HepG2 (cell line): ENCODE measurements at regions of chr2 and their contacts with region 1.

Region 1: DNA sequence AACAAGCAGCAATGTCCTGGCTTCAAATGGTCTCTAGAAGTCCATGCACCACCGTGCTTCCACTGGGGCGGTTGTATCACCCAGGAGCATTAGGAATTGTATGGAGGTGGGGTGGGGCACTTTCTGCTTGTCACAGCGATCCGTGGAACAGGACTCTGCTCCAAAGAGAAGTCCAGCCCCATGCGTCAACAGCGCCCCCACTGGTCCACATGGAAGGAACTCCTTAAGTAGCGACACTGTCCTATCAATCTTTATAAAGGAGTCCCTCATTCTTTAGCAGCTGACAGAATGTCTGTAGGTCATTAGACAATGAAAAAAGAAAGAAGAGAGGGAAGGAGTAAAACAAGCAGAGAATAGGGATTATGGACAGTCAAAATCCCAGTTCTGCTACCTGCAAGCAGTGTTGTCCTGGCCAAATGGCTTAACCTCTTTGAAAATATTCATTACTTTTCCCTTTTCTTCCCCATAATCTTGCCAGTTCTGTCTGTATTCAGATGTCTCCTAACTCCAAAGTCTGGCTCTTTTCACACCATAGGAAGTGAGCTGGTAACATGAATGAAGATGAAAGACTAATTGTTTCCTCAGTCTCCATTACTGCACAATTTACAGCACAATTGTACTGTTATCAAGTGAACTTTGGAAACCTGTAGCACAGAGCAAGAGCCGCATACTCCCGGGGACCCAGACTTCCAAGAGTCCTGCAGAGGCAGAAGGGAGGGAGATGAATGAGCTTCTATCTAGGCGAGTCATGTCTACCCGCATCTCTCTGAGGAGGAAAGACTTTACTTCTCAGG is 9.9 kb downstream of the NFE2L2 start:
- DNase-seq: peak; percentile 76
- ATAC-seq: peak; percentile 60
- H3K4me3 ChIP-seq: peak overlapping the region in 1 of 3 experiments; percentile 20; a peak in 1 of 6 replicates
- H3K27ac ChIP-seq: peak overlapping the region; percentile 54
- H3K4me1 ChIP-seq: peaks cover 100% of the 10 kb centered on the region
- H3K27me3 ChIP-seq: no peaks in the 10 kb centered on the region
- CTCF ChIP-seq: peak; percentile 84
- EP300 ChIP-seq: peak in 1 of 2 experiments; percentile 48; a peak in 1 of 4 replicates
- POLR2A ChIP-seq: peak; percentile 7 to 14; a peak in 2 of 4 replicates
- RAD21 ChIP-seq: peak; percentile 71

Region 2: GRCh38 chr2:177239932-177240630 is 14.5 kb before region 1 on chr2:
- CTCF ChIA-PET with region 1: no interaction called
- POLR2A ChIA-PET with region 1: interaction called, 7 read pairs
- in situ Hi-C with region 1: no loop called
- intact Hi-C with region 1: loop called (anchors 1 kb)
- DNase-seq: no peak
- ATAC-seq: peak; percentile 2; the same call in 2 of the 3 replicates
- H3K4me3 ChIP-seq: no peak overlapping the region
- H3K27ac ChIP-seq: peak overlapping the region; percentile 37
- H3K4me1 ChIP-seq: peaks cover 96% of the 10 kb centered on the region
- H3K27me3 ChIP-seq: no peaks in the 10 kb centered on the region
- CTCF ChIP-seq: no peak
- EP300 ChIP-seq: no peak
- POLR2A ChIP-seq: no peak
- RAD21 ChIP-seq: no peak

Region 3: DNA sequence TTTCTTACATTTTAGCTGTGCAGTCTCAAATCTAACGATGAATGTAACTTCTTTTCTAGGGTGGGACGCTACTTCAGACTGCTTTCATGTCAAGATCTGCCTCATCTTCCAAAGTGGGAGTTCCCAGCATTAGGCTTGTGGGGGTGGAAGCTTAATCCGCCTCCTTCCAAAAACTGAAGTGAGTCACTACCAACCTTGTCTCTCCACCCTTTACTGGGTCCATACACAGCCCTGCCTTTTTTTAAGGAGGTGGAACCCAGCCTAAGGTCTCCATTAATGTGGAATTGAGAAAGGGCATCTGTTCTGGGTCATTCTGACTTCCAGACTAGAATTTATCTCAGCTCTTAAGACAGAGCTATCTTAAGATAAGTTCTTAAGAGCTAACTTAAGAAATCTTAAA is 51.9 kb after region 1 on chr2:
- CTCF ChIA-PET with region 1: no interaction called
- POLR2A ChIA-PET with region 1: no interaction called
- in situ Hi-C with region 1: no loop called
- intact Hi-C with region 1: no loop called
- DNase-seq: no peak
- ATAC-seq: no peak
- H3K4me3 ChIP-seq: no peak overlapping the region
- H3K27ac ChIP-seq: no peak overlapping the region
- H3K4me1 ChIP-seq: no peaks in the 10 kb centered on the region
- H3K27me3 ChIP-seq: no peaks in the 10 kb centered on the region
- CTCF ChIP-seq: no peak
- EP300 ChIP-seq: no peak
- POLR2A ChIP-seq: no peak
- RAD21 ChIP-seq: no peak